GM10248 (cell line): ENCODE measurements at regions of chr18 and their contacts with region 1.

Region 1: DNA sequence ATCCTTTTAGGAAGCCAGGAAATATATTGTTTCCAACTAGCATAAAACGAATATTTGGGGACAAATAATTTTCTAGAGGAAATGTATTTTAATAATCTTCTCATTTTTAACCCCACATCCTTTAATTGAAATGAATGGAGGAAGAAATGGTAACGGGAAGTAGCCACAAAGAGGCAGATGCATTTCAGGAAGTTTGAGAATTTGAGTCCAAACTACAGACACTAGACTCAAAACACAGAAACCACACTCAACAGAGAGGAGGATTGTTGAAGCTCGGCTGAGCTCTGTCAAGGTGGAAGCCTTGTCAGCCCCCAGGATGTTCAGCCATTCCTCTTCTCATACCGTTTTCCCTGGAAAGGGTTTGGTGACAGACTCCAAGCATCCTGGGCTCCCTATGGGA is 288.5 kb downstream of the NAPG start:
- DNase-seq: no peak
- CTCF ChIP-seq: no peak

Region 2: DNA sequence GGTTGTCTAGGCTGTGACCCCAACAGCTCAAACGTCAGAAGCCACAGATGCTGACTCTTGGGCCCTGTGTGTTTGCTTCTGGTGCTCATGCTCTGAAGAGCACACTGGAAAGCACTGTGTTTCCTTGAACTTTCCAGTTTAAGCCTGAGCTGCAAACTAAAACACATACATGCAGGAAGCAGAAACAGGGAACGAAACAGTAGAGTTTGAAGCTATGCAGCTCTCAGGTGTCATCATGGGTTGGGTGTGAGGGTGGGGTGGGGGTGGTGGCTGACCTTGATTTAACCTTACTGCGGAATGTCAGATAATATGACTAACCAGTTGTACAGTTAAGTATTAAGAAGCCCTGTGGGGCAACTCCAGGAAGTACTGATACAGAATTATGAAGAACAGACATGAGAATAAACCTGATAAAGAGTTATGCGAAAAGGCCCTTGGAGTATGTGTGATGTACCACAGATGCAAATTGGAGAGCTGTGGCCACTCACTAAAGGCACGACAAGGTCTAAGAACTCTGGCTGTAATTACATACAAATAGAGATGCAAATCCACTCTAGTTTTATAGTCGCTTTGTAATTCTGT is 15.5 kb before region 1 on chr18:
- CTCF ChIA-PET with region 1: interaction called, 10 read pairs
- POLR2A ChIA-PET with region 1: no interaction called
- DNase-seq: no peak
- CTCF ChIP-seq: no peak